Gastrocnemius medialis (tissue), 4 donors: ENCODE measurements at regions of chr20 and their contacts with region 1.

Region 1: DNA sequence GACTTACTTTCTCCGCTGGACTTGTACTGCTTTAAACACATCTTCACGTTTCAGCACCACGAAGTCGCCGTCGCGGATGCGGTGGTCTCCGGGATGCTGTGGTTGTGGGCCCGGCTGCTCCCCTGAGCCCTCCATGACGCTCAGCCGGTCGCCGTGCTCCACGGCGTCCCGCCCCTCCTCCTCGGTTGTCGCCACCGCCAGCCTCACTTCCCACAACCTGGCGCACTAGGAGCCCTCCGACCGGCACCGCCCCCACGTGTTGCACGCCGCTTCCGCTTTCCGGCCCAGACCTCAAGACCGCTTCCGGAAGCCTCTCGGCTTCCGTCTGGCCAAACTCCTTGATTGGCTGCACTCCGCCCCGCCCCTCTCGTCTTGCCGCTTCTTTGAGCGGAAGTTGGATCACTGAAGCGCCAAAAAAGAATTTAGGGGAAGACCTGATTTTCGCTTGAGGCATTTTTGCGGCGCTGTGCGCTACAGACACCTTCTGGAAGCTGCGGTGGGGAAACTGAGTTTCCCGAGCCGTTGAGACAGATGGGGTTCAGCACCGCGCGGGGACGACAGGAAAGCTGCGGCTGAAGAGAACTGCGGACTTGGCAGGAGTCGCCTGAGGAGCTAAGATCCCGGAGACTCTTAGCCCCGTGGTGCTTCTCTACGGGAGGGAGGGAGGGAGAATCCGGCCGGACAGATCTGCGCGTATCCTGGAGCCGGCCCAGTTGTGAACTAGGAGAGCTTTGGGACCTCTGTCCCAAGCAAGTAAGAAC is at the starts of genes MCM8 and TRMT6:
- DNase-seq: peak; percentile 94 to 95
- ATAC-seq: peak; percentile 97 to 98
- H3K4me3 ChIP-seq: peak within 1 kb of the TSS; percentile 63 to 90 (median 84)
- H3K27ac ChIP-seq: peak within 1 kb of the TSS; percentile 85 to 89 (median 86)
- H3K4me1 ChIP-seq: peaks cover 16 to 18% of the 10 kb centered on the region in 2 donors
- H3K27me3 ChIP-seq: no peaks in the 10 kb centered on the region
- CTCF ChIP-seq: peak in 1 of 5 experiments; percentile 24
- POLR2A ChIP-seq: peak; percentile 60 to 67
- total RNA-seq, gene MCM8: 2.4 to 5.9 (median 5.2) TPM
- total RNA-seq, gene TRMT6: 16.5 to 27.5 (median 19.0) TPM

Region 2: GRCh38 chr20:5557123-5557522 is 393.3 kb before region 1 on chr20:
- in situ Hi-C with region 1: loop called in 1 of 4 experiments (anchors 25 kb)
- intact Hi-C with region 1: no loop called
- DNase-seq: peak in 1 of 2 donors; percentile 24
- ATAC-seq: peak; percentile 54 to 60
- H3K4me3 ChIP-seq: no peak overlapping the region
- H3K27ac ChIP-seq: no peak overlapping the region
- H3K4me1 ChIP-seq: no peaks in the 10 kb centered on the region
- H3K27me3 ChIP-seq: no peaks in the 10 kb centered on the region
- CTCF ChIP-seq: peak in 4 of 5 experiments; percentile 26 to 44 (median 38)
- POLR2A ChIP-seq: no peak

Region 3: DNA sequence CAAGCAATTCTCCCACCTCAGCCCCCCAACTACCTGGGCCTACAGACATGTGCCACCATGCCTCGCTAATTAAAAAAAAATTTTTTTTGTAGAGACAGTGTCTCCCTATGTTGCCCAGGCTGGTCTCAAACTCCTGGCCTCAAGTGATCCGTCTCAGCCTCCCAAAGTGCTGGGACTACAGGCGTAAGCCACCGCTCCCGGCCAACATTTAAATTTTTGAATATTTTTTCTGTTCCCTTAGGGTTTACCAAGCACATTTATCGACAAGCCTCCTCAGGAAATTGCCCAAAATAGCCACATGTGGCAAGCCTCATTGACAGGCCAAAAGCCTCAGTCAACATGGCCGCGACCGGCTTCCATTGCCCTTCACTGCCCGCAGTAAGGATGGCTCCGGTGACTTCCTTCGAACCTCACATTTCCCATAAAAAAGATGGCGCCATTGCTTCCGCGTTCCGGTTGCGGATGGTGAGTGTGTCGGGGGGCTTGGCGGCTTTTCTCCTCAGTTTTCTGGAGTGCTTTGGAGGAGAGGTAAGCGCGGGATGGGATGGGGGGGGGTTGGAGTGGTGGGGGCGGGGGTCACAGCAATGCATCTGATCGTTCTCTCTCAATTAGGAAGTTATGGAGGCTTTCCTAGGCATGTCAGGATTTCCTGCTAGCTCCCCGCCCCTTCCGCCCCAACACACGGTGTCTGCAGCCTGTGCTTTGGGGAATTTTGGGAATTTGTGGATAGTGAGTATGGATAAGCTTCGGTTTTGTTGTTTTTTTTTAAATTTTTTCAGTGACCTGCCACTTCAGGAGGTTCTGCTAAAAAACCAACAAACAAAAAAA is 200.3 kb before region 1 on chr20 and contains the start of gene SHLD1:
- in situ Hi-C with region 1: no loop called
- intact Hi-C with region 1: loop called (anchors 2 kb)
- DNase-seq: peak; percentile 73 to 83
- ATAC-seq: peak; percentile 96 to 97
- H3K4me3 ChIP-seq: peak within 1 kb of the TSS; percentile 64 to 77 (median 71)
- H3K27ac ChIP-seq: peak within 1 kb of the TSS; percentile 83 to 87 (median 84)
- H3K4me1 ChIP-seq: peaks cover 10 to 12% of the 10 kb centered on the region in 2 donors
- H3K27me3 ChIP-seq: no peaks in the 10 kb centered on the region
- CTCF ChIP-seq: no peak
- POLR2A ChIP-seq: no peak
- total RNA-seq, gene SHLD1: 5.4 to 7.1 (median 5.8) TPM

Region 4: DNA sequence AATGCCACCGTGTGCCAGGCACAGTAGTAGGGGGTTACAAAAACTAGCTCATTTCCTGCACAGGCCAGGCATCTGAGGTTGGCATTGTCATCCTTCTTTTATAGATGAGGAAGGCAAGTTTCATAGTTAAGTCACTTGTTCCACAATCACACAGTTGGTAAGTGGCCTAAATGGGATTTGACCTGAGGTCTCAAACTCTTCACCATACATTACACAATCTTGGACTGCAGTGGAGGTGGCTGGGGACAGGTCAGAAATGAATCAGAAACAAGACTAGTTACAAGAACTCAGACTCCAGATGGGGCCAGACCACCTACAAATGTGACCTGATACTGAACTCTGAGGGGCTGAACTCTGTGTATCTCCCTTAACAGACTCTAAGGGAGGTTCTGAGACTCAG is 49.5 kb before region 1 on chr20:
- in situ Hi-C with region 1: no loop called
- intact Hi-C with region 1: no loop called
- DNase-seq: no peak
- ATAC-seq: no peak
- H3K4me3 ChIP-seq: no peak overlapping the region
- H3K27ac ChIP-seq: no peak overlapping the region
- H3K4me1 ChIP-seq: no peaks in the 10 kb centered on the region
- H3K27me3 ChIP-seq: no peaks in the 10 kb centered on the region
- CTCF ChIP-seq: no peak
- POLR2A ChIP-seq: no peak

Region 5: GRCh38 chr20:6074145-6074561 is 123.7 kb after region 1 on chr20:
- in situ Hi-C with region 1: loop called in 1 of 4 experiments (anchors 25 kb)
- intact Hi-C with region 1: loop called (anchors 1 kb)
- DNase-seq: no peak
- ATAC-seq: no peak
- H3K4me3 ChIP-seq: no peak overlapping the region
- H3K27ac ChIP-seq: no peak overlapping the region
- H3K4me1 ChIP-seq: peaks cover 6 to 8% of the 10 kb centered on the region in 2 donors
- H3K27me3 ChIP-seq: no peaks in the 10 kb centered on the region
- CTCF ChIP-seq: no peak
- POLR2A ChIP-seq: no peak